ENCODE measurements at regions of chr12 and their contacts with region 1.

Region 1: DNA sequence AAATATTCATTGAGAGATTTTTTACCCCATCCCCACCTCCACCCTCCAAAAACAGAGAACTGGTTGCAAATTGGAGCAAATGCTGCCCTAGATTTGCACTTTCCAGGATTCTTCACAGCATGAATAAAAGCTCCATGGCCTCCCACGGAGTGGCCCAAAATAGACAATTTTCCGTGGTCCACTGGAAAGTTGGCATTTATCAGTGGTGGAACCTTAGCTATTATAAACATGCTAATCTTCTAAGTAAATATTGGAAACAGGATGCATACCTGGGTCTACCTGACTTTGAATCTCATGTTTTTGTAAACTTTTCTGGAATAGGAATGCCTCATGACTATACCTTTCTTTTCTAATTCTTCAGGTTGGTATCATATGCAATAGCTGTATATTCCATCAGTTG is 123.9 kb downstream of the SLC16A7 start:
- DNase-seq: no peak
- H3K4me3 ChIP-seq: no peak overlapping the region
- H3K27ac ChIP-seq: no peak overlapping the region
- H3K4me1 ChIP-seq: peaks cover 0 to 8% of the 10 kb centered on the region in 2 donors
- H3K27me3 ChIP-seq: no peaks in the 10 kb centered on the region
- CTCF ChIP-seq: no peak
- POLR2A ChIP-seq: no peak

Region 2: GRCh38 chr12:59699421-59700152 is 20.1 kb before region 1 on chr12:
- intact Hi-C with region 1: loop called in 1 of 2 experiments (anchors 1 kb)
- DNase-seq: peak in 2 of 7 donors; percentile 20 to 22
- H3K4me3 ChIP-seq: peak overlapping the region in 1 of 4 donors; percentile 9
- H3K27ac ChIP-seq: peak overlapping the region in 3 of 5 donors; percentile 34 to 46 (median 46)
- H3K4me1 ChIP-seq: peaks cover 0 to 11% of the 10 kb centered on the region in 2 donors
- H3K27me3 ChIP-seq: no peaks in the 10 kb centered on the region
- CTCF ChIP-seq: no peak
- POLR2A ChIP-seq: no peak